ENCODE measurements at regions of chr15 and their contacts with region 1.

Region 1: DNA sequence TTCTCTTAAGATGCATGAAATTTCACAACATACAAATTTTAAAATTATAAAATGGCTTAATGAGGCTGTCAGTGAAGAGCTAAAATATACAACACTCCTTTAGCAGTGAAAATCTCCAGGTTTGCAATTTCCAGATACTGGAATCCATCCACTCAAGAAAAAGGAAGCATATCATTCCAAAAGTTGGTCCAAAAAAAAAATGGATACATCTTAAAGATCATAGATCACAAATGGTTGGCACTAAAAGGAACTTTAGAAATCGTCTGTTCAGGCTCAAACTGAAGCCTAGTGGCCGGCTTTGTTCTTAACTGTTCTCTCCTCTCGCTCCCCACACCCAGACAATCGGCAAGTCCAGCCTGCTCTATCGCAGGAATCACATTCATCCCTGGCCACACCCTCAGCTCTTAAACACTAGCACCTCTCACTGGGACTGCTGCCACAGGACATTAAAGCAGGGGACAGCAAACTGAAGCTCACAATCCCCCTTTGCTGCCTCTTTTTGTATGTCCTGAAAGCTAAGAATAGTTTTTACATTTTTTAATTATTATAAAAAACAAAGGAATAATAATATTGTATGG is 130.3 kb upstream of the CDIN1 start:
- DNase-seq: peak; percentile 66 to 94 (median 76)
- ATAC-seq: peak; percentile 100
- H3K4me3 ChIP-seq: no peak overlapping the region
- H3K27ac ChIP-seq: peak overlapping the region; percentile 74; the same call in 2 of the 3 replicates
- H3K4me1 ChIP-seq: peaks cover 2 to 15% of the 10 kb centered on the region in 2 experiments; a peak in 2 of 5 replicates
- H3K27me3 ChIP-seq: no peaks in the 10 kb centered on the region
- CTCF ChIP-seq: peak; percentile 53 to 68 (median 67); a peak in 5 of 6 replicates
- EP300 ChIP-seq: peak; percentile 78
- POLR2A ChIP-seq: no peak
- RAD21 ChIP-seq: peak; percentile 67 to 84

Region 2: GRCh38 chr15:35751413-35752133 is 697.6 kb before region 1 on chr15:
- CTCF ChIA-PET with region 1: no interaction called
- POLR2A ChIA-PET with region 1: no interaction called
- in situ Hi-C with region 1: no loop called
- intact Hi-C with region 1: loop called (anchors 10 kb)
- DNase-seq: peak; percentile 53 to 79 (median 55)
- ATAC-seq: peak; percentile 93
- H3K4me3 ChIP-seq: no peak overlapping the region
- H3K27ac ChIP-seq: no peak overlapping the region
- H3K4me1 ChIP-seq: no peaks in the 10 kb centered on the region
- H3K27me3 ChIP-seq: no peaks in the 10 kb centered on the region
- CTCF ChIP-seq: peak; percentile 60 to 75 (median 68)
- EP300 ChIP-seq: no peak
- POLR2A ChIP-seq: no peak
- RAD21 ChIP-seq: peak; percentile 48 to 69

Region 3: GRCh38 chr15:36208868-36209582 is 240.1 kb before region 1 on chr15:
- CTCF ChIA-PET with region 1: no interaction called
- POLR2A ChIA-PET with region 1: no interaction called
- in situ Hi-C with region 1: no loop called
- intact Hi-C with region 1: loop called (anchors 5 kb)
- DNase-seq: no peak
- ATAC-seq: no peak
- H3K4me3 ChIP-seq: no peak overlapping the region
- H3K27ac ChIP-seq: no peak overlapping the region
- H3K4me1 ChIP-seq: no peaks in the 10 kb centered on the region
- H3K27me3 ChIP-seq: no peaks in the 10 kb centered on the region
- CTCF ChIP-seq: no peak
- EP300 ChIP-seq: no peak
- POLR2A ChIP-seq: no peak
- RAD21 ChIP-seq: no peak

Region 4: GRCh38 chr15:36428102-36428845 is 20.9 kb before region 1 on chr15:
- CTCF ChIA-PET with region 1: no interaction called
- POLR2A ChIA-PET with region 1: interaction called, 3 read pairs
- in situ Hi-C with region 1: no loop called
- intact Hi-C with region 1: loop called (anchors 1 kb)
- DNase-seq: peak; percentile 75 to 94 (median 82)
- ATAC-seq: peak; percentile 97
- H3K4me3 ChIP-seq: peak overlapping the region; percentile 12; the same call in 1 of the 2 replicates
- H3K27ac ChIP-seq: peak overlapping the region; percentile 82
- H3K4me1 ChIP-seq: peaks cover 13 to 47% of the 10 kb centered on the region in 2 experiments
- H3K27me3 ChIP-seq: no peaks in the 10 kb centered on the region
- CTCF ChIP-seq: no peak; a peak in 1 of 6 replicates
- EP300 ChIP-seq: peak; percentile 98
- POLR2A ChIP-seq: no peak
- RAD21 ChIP-seq: no peak; a peak in 1 of 4 replicates

Region 5: DNA sequence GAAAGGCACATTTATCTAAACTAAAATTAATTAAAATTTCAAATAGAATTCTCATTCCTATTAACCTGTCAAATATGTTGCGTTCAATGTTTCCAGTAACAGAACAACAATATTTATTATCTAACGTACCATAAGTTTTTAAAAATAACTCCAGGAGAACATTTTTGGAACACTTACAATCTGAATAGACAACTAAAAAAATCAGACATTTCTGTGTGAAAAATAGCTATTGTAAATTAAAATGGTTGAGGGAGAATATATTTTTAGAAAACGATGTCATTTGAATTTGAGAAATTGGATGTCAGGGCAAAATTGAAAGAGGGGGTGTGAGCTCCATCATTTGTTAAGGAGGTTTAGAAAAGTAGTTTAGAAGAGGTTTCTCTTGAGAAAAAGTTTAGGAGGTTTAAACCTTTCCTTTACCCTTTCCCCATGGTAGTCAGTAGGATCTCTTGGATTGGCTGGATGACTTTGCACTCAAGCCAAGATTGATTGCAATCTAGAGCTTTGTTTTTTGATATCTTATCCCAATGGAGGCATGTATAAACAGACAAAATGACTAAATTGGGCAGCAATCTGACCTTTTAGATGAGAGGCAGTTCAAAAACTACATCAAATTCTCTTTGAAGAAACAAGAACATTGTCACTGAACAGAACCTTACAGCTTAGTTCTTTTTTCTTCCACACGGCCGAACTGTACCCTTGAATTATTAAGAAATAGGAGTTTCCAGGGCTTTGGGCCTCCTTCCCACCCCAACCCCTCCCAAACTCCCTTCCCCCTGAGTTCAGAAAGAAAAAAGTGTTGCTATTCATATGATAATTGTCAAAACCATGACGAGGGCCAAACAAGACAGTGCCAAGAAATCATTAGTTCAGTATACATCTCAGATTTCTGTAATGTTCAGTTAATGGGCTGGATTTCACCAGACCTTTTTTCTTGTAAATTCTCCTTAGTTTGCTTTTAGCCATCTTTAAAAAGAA is 50.5 kb after region 1 on chr15:
- CTCF ChIA-PET with region 1: no interaction called
- POLR2A ChIA-PET with region 1: no interaction called
- in situ Hi-C with region 1: no loop called
- intact Hi-C with region 1: no loop called
- DNase-seq: no peak
- ATAC-seq: no peak
- H3K4me3 ChIP-seq: no peak overlapping the region
- H3K27ac ChIP-seq: no peak overlapping the region
- H3K4me1 ChIP-seq: no peaks in the 10 kb centered on the region
- H3K27me3 ChIP-seq: no peaks in the 10 kb centered on the region
- CTCF ChIP-seq: no peak
- EP300 ChIP-seq: no peak
- POLR2A ChIP-seq: no peak
- RAD21 ChIP-seq: no peak